HCT116 (cell line): ENCODE measurements at regions of chr20 and their contacts with region 1.

Region 1: GRCh38 chr20:36344517-36345136 is 38.5 kb downstream of the DLGAP4 start:
- DNase-seq: peak; percentile 13
- ATAC-seq: peak; percentile 63; the same call in 1 of the 2 replicates
- H3K4me3 ChIP-seq: no peak overlapping the region
- H3K27ac ChIP-seq: no peak overlapping the region
- H3K4me1 ChIP-seq: no peaks in the 10 kb centered on the region
- H3K27me3 ChIP-seq: no peaks in the 10 kb centered on the region
- CTCF ChIP-seq: no peak
- POLR2A ChIP-seq: no peak
- RAD21 ChIP-seq: no peak

Region 2: DNA sequence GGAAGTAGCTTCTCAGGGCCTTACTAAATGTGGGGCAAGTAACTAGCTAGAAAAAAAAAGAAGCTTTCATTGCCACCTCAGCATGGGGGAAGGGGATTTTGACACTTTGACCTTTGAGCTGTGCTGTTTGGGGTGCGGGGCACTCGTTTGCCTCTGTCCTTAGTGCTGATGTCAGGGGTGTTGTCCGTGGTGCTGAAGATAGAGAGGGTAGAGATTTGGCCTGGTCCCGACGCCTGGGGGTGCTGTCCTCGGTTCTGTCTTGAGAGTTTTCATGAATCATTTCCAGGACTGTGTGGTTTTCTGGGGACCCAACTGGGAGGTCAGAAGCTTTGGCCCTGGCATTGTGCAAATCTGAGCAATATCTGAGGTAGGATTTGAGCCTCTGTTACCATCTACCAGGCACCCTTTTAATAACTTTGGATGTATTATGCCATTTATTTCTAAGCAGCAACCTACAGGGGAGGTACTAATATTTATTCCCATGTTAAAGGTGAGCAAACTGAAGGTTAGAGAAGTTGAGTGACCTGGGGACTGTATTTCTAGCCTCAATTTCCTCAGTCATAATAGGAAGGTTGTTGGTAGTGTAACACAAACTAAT is 39.5 kb after region 1 on chr20:
- CTCF ChIA-PET with region 1: no interaction called
- POLR2A ChIA-PET with region 1: no interaction called
- RAD21 ChIA-PET with region 1: no interaction called
- intact Hi-C with region 1: loop called (anchors 5 kb)
- DNase-seq: peak; percentile 31
- ATAC-seq: peak; percentile 84
- H3K4me3 ChIP-seq: no peak overlapping the region
- H3K27ac ChIP-seq: no peak overlapping the region
- H3K4me1 ChIP-seq: no peaks in the 10 kb centered on the region
- H3K27me3 ChIP-seq: peaks cover 32% of the 10 kb centered on the region
- CTCF ChIP-seq: peak; percentile 14 to 50 (median 42); a peak in 4 of 6 replicates
- POLR2A ChIP-seq: no peak
- RAD21 ChIP-seq: peak; percentile 22; the same call in 1 of the 2 replicates